ENCODE measurements at regions of chr10 and their contacts with region 1.

Region 1: DNA sequence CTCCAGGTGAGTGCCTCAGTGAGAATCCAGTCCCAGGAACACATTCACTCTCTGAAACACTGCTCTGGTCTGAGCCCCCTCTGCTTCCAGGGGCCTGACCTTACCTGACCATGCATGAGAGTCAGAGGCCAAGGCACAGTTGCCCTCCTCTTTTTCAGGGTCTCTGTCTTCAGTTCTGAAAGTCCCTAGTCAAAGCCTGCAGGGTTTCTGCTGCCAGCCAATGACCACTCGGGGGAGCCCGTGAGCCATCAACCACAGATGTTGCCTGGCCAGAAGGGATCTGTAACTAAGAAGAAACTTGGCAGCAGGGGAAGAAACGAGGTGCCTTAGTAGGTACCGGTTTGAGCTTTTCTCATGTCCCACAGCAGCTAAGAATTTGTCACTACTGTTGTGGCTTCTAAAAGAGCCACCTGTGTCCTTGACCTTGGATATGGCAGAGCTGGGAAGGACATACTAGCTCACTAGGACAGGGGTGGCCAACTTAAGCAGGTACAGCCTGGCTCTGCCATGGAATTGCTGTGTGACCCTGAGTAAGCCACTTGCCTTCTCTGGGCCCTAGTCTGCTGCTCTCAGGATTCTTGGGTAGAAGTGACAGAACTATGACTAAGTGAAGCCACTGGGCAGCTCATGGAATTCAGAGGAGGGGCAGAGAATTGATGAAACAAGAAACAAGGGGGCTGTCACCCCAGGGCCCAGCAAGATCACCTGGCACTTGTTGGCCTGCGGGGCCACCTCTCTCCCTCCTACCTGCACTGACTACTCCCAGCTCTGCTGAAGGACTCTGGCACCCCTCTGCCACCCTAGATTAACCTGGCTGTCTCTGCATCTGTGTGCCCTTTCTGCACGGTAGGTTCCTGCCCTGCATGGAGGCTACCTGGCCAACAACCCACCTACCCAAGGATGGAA is 83.8 kb upstream of the GPR26 start:
- DNase-seq: peak; percentile 68 to 97 (median 86)

Region 2: GRCh38 chr10:123967396-123968243 is 385.3 kb after region 1 on chr10:
- intact Hi-C with region 1: loop called (anchors 1 kb)
- DNase-seq: peak; percentile 61 to 97 (median 86)

Region 3: DNA sequence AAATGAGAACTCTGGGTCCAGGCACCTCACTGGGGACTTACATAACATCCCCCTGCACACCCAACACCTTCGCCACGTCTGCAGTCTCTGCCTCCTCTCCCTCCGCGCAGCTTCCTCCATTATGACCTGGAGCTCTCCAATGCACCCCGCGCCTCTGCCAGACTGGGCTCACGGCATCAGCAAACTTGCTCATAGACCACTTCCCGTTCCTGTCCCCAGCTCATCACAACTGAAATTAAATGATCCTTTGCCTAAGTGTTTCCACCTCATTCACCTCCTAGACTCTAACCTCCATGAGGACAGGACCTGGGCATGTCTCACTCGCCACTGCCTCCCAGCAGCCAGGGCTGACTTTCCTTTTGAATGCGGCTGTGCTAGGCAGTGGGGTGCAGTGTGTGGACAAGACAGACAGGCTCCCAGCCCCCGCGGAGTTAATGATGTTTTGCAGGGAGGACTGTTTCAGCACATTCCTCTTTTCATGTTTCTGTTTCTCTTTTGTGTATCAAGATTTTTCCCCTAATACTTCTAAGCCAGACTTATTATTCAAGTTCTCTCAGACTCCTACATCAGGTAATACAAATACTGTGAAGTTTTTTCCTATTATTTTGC is 492.3 kb after region 1 on chr10:
- intact Hi-C with region 1: no loop called
- DNase-seq: peak in 2 of 10 donors; percentile 69 to 84

Region 4: GRCh38 chr10:124388823-124389612 is 806.7 kb after region 1 on chr10:
- intact Hi-C with region 1: loop called (anchors 5 kb)
- DNase-seq: peak; percentile 78 to 98 (median 87)

Measured in posterior cingulate gyrus (tissue), 11 donors.